ENCODE measurements at regions of chr17 and their contacts with region 1.

Region 1: GRCh38 chr17:50478391-50479381 is at the start of gene RSAD1:
- DNase-seq: peak; percentile 83
- H3K4me3 Mint-ChIP-seq: peak within 1 kb of the TSS; percentile 69
- H3K27ac Mint-ChIP-seq: peak within 1 kb of the TSS; percentile 75
- H3K4me1 Mint-ChIP-seq: peaks cover 25% of the 10 kb centered on the region
- H3K27me3 Mint-ChIP-seq: no peaks in the 10 kb centered on the region
- CTCF ChIP-seq: peak; percentile 81
- total RNA-seq, gene RSAD1: 25.2 and 28.7 TPM in 2 replicates

Region 2: DNA sequence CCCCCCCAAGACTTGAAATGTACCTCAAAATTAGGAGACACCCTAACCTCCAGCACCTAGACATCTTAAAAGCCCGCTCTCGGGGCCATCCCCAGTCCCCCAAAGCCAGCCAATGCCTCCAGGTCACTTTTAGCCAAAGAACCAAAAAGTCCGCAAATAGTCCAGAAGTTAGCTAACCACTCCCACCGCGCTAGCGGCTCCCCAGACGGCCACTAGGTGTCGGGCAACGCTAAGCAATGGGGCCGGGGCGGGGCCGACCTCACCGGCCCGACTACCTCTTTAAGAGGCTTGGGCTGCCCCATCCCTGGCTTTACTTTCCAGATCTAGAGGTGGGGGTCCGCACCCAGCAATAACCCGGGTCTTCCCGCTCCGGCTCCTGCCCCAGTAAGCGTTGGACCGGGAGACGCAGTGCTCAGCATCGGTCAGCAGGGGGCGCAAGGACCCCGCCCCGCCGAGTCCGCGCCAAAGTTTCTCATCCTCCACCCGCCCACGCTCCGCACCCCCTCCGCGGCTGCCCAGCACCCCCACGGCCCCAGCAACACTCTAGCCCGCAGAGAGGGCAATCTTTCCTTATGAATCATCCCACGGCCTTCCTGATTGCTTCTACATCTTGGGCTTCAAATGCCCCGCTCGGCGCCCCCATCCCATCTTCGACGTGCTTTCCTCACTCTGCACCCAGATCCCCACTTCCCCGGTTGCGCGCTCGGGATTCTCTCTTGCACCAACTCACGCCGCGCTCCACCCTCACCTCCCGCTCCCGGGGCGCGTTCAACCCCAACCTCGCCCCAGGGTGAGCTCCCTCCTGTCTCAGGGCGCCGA is 278.0 kb before region 1 on chr17:
- CTCF ChIA-PET with region 1: interaction called, 8 read pairs
- POLR2A ChIA-PET with region 1: interaction called, 8 read pairs
- intact Hi-C with region 1: loop called (anchors 1 kb)
- DNase-seq: peak; percentile 90
- H3K4me3 Mint-ChIP-seq: peak overlapping the region; percentile 78
- H3K27ac Mint-ChIP-seq: peak overlapping the region; percentile 64
- H3K4me1 Mint-ChIP-seq: peaks cover 20% of the 10 kb centered on the region
- H3K27me3 Mint-ChIP-seq: peaks cover 9% of the 10 kb centered on the region
- CTCF ChIP-seq: peak; percentile 99

Region 3: GRCh38 chr17:50311483-50311882 is 167.2 kb before region 1 on chr17:
- CTCF ChIA-PET with region 1: no interaction called
- POLR2A ChIA-PET with region 1: no interaction called
- intact Hi-C with region 1: no loop called
- DNase-seq: no peak
- H3K4me3 Mint-ChIP-seq: no peak overlapping the region
- H3K27ac Mint-ChIP-seq: no peak overlapping the region
- H3K4me1 Mint-ChIP-seq: no peaks in the 10 kb centered on the region
- H3K27me3 Mint-ChIP-seq: peaks cover 12% of the 10 kb centered on the region
- CTCF ChIP-seq: no peak

Region 4: DNA sequence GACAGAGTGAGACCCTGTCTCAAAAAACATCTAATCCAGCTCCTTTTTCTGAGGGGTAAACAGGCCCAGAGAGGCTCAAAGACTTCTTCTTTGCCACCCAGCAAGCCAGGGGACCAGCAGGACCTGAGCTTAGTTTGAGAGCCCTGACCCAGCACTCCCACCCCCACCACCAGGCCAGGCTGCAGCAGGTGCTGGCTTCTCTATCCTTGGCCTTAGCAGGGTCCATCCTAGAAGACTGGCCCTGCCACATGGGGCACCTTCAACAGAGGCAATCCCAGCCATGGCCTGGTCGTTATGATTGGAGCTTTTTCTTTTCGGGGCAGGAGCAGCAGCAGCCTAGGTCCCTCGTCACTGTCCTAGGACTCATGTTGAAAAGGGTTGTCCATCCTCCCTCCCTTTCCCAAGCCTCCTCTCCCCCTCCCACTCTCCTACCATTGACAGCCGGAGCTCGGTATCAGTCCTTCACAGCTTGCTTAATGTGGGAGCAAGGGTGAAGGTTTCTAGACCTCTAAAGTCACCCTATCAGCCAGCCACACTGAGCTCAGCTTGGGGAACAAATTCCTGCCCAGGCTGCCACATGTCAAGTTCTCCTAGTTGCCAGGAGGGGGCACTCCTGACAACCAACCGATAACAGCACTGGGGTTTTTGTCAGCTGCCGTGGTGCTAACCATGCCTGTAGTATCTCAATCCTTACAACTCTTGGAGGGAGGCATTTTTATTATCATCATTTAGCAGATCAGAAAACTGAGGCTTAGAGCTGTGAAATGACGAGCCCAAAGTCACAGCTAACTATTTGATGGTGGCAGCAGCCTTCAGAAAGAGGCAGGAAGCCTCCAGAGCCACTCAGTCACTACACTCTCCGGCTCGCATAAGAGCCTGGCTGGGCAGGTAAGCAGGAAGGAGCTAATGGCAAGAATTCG is 116.9 kb before region 1 on chr17:
- CTCF ChIA-PET with region 1: interaction called, 38 read pairs
- POLR2A ChIA-PET with region 1: interaction called, 19 read pairs
- intact Hi-C with region 1: no loop called
- DNase-seq: peak; percentile 74
- H3K4me3 Mint-ChIP-seq: no peak overlapping the region
- H3K27ac Mint-ChIP-seq: peak overlapping the region; percentile 67
- H3K4me1 Mint-ChIP-seq: peaks cover 7% of the 10 kb centered on the region
- H3K27me3 Mint-ChIP-seq: no peaks in the 10 kb centered on the region
- CTCF ChIP-seq: peak; percentile 62

Region 5: DNA sequence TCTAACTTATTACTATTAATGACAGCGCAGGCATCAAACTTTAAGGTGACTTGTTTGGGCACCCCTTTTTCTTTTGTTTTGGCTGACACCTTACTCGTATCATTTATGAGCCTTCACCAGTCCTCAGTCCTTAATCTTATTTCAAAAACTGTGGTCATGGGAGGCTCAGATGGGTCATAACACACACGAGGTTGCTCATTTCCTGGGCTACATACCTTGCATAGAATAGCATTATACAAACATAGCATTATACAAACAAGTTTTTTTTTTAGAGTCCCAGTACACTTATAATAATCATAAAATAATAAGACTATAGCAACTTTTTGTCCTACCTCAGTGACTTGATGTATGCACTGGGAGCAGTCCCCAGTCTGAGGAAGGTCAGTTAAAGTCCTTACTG is 63.9 kb before region 1 on chr17:
- CTCF ChIA-PET with region 1: no interaction called
- POLR2A ChIA-PET with region 1: no interaction called
- intact Hi-C with region 1: no loop called
- DNase-seq: no peak
- H3K4me3 Mint-ChIP-seq: no peak overlapping the region
- H3K27ac Mint-ChIP-seq: no peak overlapping the region
- H3K4me1 Mint-ChIP-seq: no peaks in the 10 kb centered on the region
- H3K27me3 Mint-ChIP-seq: peaks cover 10% of the 10 kb centered on the region
- CTCF ChIP-seq: no peak

Region 6: DNA sequence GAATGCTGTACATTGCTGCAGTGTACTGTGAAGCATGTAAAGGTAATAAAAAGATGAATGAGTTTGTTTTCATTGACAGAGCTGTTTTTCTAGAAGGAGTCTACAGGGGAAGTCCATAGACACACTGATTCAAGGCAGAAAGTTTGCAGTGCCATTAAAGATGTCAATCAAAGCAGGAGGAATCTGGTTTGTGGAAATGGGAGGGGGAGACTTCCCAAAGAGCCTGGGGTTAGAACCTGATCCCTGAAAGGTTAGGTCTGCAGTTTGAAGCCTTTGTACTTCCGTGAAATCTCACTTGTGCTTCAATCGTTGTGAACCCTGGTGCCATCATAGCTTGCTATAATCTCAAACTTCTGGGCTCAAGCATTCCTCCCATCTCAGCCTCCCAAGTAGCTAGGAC is 47.5 kb before region 1 on chr17:
- CTCF ChIA-PET with region 1: interaction called, 5 read pairs
- POLR2A ChIA-PET with region 1: interaction called, 13 read pairs
- intact Hi-C with region 1: no loop called
- DNase-seq: no peak
- H3K4me3 Mint-ChIP-seq: no peak overlapping the region
- H3K27ac Mint-ChIP-seq: no peak overlapping the region
- H3K4me1 Mint-ChIP-seq: peaks cover 15% of the 10 kb centered on the region
- H3K27me3 Mint-ChIP-seq: no peaks in the 10 kb centered on the region
- CTCF ChIP-seq: no peak

Region 7: DNA sequence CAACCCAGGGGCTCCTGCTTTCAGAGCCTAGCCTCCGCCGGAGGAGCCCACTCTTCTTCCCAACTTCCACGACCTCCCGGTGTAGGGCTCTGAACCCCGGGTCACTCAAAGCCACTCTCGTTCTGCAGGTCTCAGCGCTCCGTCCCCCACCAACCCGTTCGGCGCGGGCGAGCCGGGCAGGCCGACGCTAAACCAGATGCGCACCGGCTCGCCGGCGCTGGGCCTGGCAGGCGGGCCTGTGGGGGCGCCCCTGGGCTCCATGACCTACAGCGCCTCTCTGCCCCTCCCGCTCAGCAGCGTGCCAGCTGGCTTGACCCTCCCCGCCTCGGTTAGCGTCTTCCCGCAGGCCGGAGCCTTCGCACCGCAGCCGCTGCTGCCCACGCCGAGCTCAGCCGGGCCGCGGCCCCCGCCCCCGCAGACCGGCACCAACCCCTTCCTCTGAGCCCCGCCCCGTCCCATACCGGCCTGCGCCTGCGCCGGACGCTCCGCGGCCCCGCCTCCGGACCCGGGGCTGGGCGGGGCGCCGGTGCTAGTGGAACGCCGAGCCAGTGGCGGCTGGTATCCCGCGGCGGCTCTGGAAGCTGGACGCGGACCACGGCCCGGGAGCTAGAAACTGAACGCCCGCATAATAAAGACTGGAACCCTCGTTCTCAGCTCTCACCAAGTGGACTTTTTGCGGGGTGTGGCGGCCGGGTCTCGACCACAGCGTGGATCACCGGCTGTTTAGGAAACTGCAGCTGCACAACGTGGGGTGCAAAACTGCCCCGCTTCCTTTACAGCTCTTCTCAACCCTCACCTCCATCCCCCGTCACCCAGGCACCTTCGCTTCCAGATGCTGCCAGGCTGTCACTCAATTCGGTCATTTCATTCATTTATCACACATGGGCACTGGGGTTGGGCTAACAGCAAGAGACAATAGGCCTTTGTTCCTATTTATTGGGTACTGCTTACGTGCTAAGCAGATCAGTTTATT is 63.3 kb after region 1 on chr17:
- CTCF ChIA-PET with region 1: interaction called, 7 read pairs
- POLR2A ChIA-PET with region 1: interaction called, 59 read pairs
- intact Hi-C with region 1: loop called (anchors 1 kb)
- DNase-seq: peak; percentile 85
- H3K4me3 Mint-ChIP-seq: peak overlapping the region; percentile 70
- H3K27ac Mint-ChIP-seq: no peak overlapping the region
- H3K4me1 Mint-ChIP-seq: peaks cover 41% of the 10 kb centered on the region
- H3K27me3 Mint-ChIP-seq: no peaks in the 10 kb centered on the region
- CTCF ChIP-seq: peak; percentile 9

Region 8: GRCh38 chr17:50604513-50604912 is 125.8 kb after region 1 on chr17:
- CTCF ChIA-PET with region 1: no interaction called
- POLR2A ChIA-PET with region 1: no interaction called
- intact Hi-C with region 1: no loop called
- DNase-seq: no peak
- H3K4me3 Mint-ChIP-seq: no peak overlapping the region
- H3K27ac Mint-ChIP-seq: no peak overlapping the region
- H3K4me1 Mint-ChIP-seq: no peaks in the 10 kb centered on the region
- H3K27me3 Mint-ChIP-seq: peaks cover 37% of the 10 kb centered on the region
- CTCF ChIP-seq: no peak

Region 9: DNA sequence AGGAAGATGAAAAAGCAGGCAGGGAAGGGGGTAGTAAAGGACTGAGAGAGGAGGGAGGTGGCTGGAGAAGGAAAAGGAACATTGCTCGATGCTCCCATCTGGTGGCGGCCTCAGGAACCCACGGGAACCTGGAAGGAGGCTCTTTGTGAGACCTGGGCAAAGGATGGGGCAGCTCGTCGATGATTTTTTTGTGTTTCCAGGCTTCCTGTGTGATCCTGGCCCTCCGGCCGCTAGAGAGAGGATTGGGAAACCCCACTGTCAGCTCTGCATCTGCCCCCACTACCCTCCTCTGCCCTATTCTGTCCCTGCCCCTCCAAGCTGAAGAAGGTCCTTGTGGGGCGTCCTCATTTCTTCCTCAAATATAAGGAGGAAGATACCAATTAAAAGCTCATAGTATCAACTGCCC is 363.3 kb after region 1 on chr17:
- CTCF ChIA-PET with region 1: interaction called, 3 read pairs
- POLR2A ChIA-PET with region 1: no interaction called
- intact Hi-C with region 1: loop called (anchors 5 kb)
- DNase-seq: peak; percentile 74
- H3K4me3 Mint-ChIP-seq: no peak overlapping the region
- H3K27ac Mint-ChIP-seq: no peak overlapping the region
- H3K4me1 Mint-ChIP-seq: peaks cover 14% of the 10 kb centered on the region
- H3K27me3 Mint-ChIP-seq: no peaks in the 10 kb centered on the region
- CTCF ChIP-seq: peak; percentile 84